ENCODE measurements at regions of chr11 and their contacts with region 1.

Region 1: DNA sequence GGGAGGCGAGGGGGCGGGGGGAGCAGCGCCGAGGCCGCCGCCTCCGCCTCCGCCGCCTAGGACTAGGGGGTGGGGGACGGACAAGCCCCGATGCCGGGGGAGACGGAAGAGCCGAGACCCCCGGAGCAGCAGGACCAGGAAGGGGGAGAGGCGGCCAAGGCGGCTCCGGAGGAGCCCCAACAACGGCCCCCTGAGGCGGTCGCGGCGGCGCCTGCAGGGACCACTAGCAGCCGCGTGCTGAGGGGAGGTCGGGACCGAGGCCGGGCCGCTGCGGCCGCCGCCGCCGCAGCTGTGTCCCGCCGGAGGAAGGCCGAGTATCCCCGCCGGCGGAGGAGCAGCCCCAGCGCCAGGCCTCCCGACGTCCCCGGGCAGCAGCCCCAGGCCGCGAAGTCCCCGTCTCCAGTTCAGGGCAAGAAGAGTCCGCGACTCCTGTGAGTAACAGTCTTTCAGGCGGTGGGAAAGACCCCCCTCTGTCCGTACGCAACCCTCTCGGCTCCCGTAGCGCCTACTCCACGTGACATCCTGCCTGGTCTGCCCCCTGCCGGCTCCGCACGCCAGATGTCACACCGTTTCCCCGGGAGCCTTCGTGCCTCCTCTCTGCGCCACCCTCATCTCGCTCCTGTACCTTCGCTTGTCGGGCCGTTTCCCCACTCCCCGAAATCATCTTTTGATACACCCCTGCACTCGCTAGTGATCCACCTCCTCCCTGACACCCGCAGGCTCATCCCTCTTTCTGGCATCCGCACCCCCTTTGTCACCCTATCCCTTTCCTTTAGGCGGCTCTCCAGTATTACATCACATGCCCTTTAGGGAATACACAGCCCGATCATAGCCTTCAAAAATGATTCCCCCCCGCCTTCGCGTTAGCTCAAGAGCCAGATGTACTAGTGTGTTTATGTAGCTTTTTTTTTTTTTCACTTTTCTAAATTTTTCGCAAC is 598 bp downstream of the ZFP91 start:
- DNase-seq: peak; percentile 96
- H3K4me3 ChIP-seq: peak overlapping the region; percentile 89
- H3K27ac ChIP-seq: peak overlapping the region; percentile 100
- H3K4me1 ChIP-seq: peaks cover 25% of the 10 kb centered on the region
- H3K27me3 ChIP-seq: no peaks in the 10 kb centered on the region
- CTCF ChIP-seq: peak; percentile 67

Region 2: GRCh38 chr11:58629857-58630256 is 50.4 kb after region 1 on chr11:
- intact Hi-C with region 1: loop called (anchors 10 kb)
- DNase-seq: peak; percentile 37
- H3K4me3 ChIP-seq: no peak overlapping the region
- H3K27ac ChIP-seq: no peak overlapping the region
- H3K4me1 ChIP-seq: no peaks in the 10 kb centered on the region
- H3K27me3 ChIP-seq: no peaks in the 10 kb centered on the region
- CTCF ChIP-seq: peak; percentile 41

Region 3: DNA sequence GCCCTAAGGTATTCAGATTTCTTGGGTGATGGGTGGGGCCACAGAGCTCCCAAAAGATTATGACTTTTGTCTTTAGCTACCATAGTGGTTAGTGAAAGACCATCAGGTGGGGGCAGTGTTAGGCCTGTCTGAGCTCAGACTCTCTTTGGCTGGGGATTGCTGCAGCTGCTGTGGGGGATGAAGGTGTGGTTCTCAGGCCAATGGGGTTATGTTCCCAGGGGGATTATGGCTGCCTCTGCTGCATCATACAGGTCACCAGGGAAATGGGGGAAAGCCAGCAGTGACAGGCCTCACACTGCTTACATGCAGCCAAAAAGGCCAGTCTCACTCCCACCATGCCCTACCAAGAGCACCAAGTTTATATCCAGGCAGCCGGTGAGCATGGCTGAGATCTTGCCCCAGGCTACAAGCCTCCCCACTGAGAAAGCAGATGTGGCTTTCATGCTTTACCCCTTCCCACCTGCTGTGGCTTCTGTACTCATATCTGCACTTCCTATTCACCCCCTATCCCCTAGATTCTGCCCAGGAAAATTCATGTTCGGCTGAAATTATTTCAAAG is 67.8 kb after region 1 on chr11:
- intact Hi-C with region 1: no loop called
- DNase-seq: no peak
- H3K4me3 ChIP-seq: no peak overlapping the region
- H3K27ac ChIP-seq: no peak overlapping the region
- H3K4me1 ChIP-seq: no peaks in the 10 kb centered on the region
- H3K27me3 ChIP-seq: no peaks in the 10 kb centered on the region
- CTCF ChIP-seq: no peak

Region 4: DNA sequence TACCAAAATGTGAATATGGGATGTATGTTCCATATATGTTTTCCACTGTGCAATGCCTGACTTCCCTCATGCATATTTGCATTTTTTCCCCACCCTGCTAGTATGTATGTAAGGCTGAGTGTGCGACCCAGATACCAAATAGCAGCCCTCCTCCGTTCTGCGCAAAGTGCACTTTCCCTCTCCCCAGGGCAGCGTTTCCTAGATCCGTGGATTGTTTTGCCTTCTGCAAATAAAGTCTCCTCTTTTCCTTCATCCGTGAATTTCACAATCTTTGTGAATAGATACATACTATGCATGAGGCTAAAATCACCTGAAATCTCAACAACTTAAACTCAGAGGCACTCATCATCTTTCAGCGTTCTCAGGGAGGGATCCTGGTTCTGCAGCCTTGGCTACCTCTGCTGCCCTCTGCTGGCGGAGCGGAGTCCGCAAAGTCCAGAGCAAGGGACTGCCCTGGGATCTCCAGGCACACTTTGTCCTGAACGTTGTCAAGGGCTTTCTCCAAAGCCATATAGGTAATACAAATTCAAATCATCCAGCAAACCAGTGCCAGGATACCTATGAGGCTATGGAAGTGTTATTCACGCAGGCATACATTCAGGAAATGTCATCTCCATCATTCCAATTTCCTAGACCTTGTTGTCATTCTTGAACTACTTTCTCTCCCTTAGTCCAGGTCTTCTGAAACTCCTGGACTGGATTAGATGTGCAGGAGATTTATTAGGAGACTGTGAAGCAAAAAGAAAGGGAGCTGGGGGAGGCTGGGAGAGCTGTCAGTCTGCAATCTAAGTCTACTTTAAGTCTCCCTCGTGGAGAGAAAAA is 96.1 kb after region 1 on chr11:
- intact Hi-C with region 1: loop called (anchors 10 kb)
- DNase-seq: peak; percentile 82
- H3K4me3 ChIP-seq: no peak overlapping the region
- H3K27ac ChIP-seq: no peak overlapping the region
- H3K4me1 ChIP-seq: no peaks in the 10 kb centered on the region
- H3K27me3 ChIP-seq: no peaks in the 10 kb centered on the region
- CTCF ChIP-seq: peak; percentile 93